ENCODE measurements at regions of chr10 and their contacts with region 1.

Region 1: DNA sequence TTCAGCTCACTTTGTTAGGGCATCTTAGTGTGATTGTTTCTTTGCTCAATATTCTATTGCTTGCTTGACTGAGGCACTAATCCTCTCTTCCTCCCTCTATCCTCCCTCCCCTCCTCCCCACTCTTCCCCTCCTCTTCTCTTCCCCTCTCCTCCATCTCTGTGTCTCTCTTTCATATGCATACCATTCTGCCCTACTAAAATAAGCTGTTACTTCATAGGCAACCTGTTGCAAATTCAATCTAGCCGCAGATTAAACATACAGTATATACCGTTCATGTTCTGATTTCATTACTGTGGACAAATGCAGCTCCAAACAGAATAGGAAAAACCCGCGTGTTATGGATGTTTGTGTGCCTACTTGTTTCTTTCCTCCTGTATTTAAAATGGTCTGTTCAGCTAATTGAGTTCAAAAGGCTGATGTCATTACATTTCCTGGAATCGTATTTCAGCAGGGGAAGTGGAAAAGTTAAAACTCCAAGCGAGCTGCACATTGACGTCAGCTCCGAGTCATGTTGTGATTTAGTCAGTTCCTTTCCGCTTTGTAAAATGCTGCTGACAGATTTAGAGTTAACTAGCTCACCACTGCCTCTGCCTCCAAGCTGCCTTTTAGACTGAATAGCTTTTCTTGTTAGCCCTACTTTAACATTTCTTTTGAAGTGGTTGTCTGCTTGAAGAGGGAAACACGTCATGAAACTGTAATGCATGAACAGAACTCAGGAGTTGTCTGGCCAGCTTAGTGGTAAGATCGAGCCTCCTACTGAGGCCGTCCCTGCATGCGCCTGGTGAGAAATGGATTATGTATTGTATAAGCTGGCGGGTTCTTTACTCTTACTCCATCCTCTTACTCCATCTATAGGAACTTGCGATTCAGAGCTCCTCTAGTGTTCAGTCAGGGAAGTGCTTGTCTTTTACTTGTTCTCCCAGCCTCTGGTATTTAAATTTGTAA is 69.0 kb downstream of the CREM start:
- DNase-seq: peak; percentile 34 to 97 (median 83)
- ATAC-seq: peak; percentile 83 to 91 (median 89)
- H3K4me3 ChIP-seq: peak overlapping the region; percentile 44 to 45
- H3K4me3 Mint-ChIP-seq: peak overlapping the region; percentile 78 to 84 (median 84)
- H3K27ac ChIP-seq: peak overlapping the region; percentile 99
- H3K27ac Mint-ChIP-seq: peak overlapping the region; percentile 95 to 98
- H3K4me1 ChIP-seq: peaks cover 8 to 10% of the 10 kb centered on the region in 2 experiments
- H3K4me1 Mint-ChIP-seq: peaks cover 31 to 49% (median 34%) of the 10 kb centered on the region in 3 donors
- H3K27me3 ChIP-seq: no peaks in the 10 kb centered on the region
- H3K27me3 Mint-ChIP-seq: no peaks in the 10 kb centered on the region

Region 2: DNA sequence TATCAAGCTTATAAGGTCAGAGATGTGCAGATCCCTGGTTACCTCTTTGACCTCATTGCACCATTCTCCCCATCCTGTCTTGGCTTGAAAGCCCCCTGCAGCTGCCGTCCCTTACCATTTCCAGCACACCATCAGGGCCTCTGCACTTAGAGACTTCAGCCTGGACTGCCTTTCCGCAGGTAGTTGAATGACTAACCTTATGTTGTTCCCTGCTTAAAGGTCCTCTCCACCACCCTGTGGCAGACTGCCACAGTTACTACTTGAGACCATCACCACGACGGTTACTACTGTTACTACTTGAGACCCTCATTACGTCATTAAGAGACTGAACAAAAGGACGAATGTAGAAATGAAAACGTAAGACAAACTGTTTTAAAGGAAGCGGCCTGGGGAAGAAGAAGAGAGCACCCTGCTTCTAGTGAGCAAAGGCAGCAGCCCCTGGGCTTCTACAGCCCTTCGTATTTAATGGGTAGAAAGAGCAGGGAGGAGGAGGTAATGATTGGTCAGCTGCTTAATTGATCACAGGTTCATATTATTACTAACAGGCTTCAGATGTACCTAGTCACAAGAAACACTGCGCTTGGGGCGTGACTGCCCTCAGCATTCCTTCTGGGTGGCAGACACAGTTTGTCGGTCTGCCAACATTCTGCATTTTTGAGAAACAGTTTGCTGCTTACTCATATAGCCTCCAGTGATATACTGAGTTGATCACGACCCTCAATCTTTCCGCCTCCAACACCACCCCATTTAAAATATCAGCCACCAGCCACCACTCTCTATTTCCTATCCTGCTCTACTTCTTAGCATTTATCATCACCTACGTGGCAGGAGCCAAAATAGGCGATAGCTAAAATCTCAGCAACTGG is 306.4 kb before region 1 on chr10:
- CTCF ChIA-PET with region 1: no interaction called
- POLR2A ChIA-PET with region 1: no interaction called
- DNase-seq: no peak
- ATAC-seq: no peak
- H3K4me3 ChIP-seq: no peak overlapping the region
- H3K4me3 Mint-ChIP-seq: no peak overlapping the region
- H3K27ac ChIP-seq: no peak overlapping the region
- H3K27ac Mint-ChIP-seq: no peak overlapping the region
- H3K4me1 ChIP-seq: no peaks in the 10 kb centered on the region
- H3K4me1 Mint-ChIP-seq: no peaks in the 10 kb centered on the region
- H3K27me3 ChIP-seq: peaks cover 0 to 10% of the 10 kb centered on the region in 2 experiments
- H3K27me3 Mint-ChIP-seq: no peaks in the 10 kb centered on the region

Region 3: GRCh38 chr10:35119378-35119777 is 76.3 kb before region 1 on chr10:
- CTCF ChIA-PET with region 1: interaction called, 9 to 253 read pairs
- POLR2A ChIA-PET with region 1: interaction called, 9 to 21 read pairs
- DNase-seq: no peak
- ATAC-seq: no peak
- H3K4me3 ChIP-seq: no peak overlapping the region
- H3K4me3 Mint-ChIP-seq: no peak overlapping the region
- H3K27ac ChIP-seq: no peak overlapping the region
- H3K27ac Mint-ChIP-seq: no peak overlapping the region
- H3K4me1 ChIP-seq: no peaks in the 10 kb centered on the region
- H3K4me1 Mint-ChIP-seq: peaks cover 0 to 12% (median 3%) of the 10 kb centered on the region in 3 donors
- H3K27me3 ChIP-seq: no peaks in the 10 kb centered on the region
- H3K27me3 Mint-ChIP-seq: no peaks in the 10 kb centered on the region

Region 4: GRCh38 chr10:35135861-35136260 is 59.8 kb before region 1 on chr10:
- CTCF ChIA-PET with region 1: interaction called, 4 to 28 read pairs
- POLR2A ChIA-PET with region 1: interaction called, 8 to 261 read pairs
- DNase-seq: peak in 6 of 35 experiments; percentile 13 to 45 (median 20)
- ATAC-seq: peak in 2 of 4 experiments; percentile 24 to 42
- H3K4me3 ChIP-seq: no peak overlapping the region
- H3K4me3 Mint-ChIP-seq: peak overlapping the region; percentile 28 to 47 (median 42)
- H3K27ac ChIP-seq: peak overlapping the region; percentile 59
- H3K27ac Mint-ChIP-seq: peak overlapping the region; percentile 75 to 85
- H3K4me1 ChIP-seq: peaks cover 0 to 17% of the 10 kb centered on the region in 2 experiments
- H3K4me1 Mint-ChIP-seq: peaks cover 40 to 47% (median 45%) of the 10 kb centered on the region in 3 donors
- H3K27me3 ChIP-seq: no peaks in the 10 kb centered on the region
- H3K27me3 Mint-ChIP-seq: no peaks in the 10 kb centered on the region

Region 5: DNA sequence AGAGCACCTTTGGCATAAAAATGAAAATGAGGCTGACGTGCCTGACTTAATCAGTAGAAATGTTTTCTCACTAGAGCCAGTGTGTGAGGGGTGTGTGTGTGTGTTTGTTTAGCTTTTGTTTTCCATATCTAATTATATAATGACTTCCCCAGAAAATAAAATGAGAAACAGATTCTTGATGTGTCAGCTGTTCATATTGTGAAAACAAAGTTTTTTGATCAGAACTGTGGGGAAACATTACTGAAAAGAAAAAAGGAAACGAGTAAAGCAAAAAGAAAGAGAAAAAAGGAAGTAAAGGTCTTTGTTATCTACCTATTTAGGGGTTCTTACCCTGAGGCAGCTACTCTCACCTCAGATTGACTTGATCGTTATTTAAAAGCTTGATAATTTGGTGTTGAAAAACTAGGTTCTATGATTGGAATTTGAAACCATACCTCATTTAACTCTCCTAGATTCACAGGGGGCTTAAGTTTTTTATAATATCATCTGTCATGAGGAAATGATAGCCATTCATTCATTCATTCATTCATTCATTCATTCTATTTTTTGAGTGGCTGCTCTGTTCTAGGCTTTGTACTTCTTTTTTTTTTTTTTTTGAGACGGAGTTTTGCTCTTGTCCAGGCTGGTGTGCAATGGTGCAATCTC is 11.0 kb before region 1 on chr10:
- CTCF ChIA-PET with region 1: interaction called, 3 to 17 read pairs
- POLR2A ChIA-PET with region 1: interaction called, 3 to 10 read pairs
- DNase-seq: no peak
- ATAC-seq: no peak
- H3K4me3 ChIP-seq: no peak overlapping the region
- H3K4me3 Mint-ChIP-seq: no peak overlapping the region
- H3K27ac ChIP-seq: no peak overlapping the region
- H3K27ac Mint-ChIP-seq: peak overlapping the region in 1 of 2 donors; percentile 46
- H3K4me1 ChIP-seq: no peaks in the 10 kb centered on the region
- H3K4me1 Mint-ChIP-seq: peaks cover 0 to 3% (median 0%) of the 10 kb centered on the region in 3 donors
- H3K27me3 ChIP-seq: no peaks in the 10 kb centered on the region
- H3K27me3 Mint-ChIP-seq: no peaks in the 10 kb centered on the region

Region 6: DNA sequence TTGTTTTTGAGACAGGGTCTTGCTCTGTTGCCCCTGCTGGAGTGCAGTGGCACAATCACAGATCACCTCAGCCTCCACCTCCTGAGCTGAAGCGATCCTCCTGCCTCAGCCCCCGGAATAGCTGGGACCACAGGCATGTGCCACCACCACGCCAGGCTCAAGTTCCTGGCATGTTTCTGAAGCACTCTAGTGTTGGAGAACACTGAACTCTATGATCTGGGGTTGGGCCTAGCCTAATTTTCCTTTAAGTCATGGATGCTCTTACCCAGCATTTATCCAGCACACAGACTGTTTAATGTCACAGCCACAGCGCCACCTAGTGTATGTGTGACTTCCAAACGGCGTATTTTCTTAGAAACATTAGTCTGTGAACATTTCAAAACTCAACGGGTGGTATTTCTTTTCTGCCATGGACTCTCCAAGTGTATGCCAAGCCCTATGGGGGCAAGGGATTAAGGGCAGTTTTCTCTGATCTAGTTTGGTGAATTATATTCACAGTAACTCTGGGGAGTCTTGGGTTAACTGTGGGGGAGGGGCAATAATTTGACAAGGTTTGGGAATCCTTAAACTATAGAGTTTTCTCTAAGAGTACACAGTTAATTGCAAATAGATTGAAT is 22.8 kb after region 1 on chr10:
- CTCF ChIA-PET with region 1: interaction called, 6 to 39 read pairs
- POLR2A ChIA-PET with region 1: interaction called in 1 of 2 experiments, 6 read pairs
- DNase-seq: peak; percentile 57 to 93 (median 78)
- ATAC-seq: peak; percentile 65 to 81 (median 72)
- H3K4me3 ChIP-seq: no peak overlapping the region
- H3K4me3 Mint-ChIP-seq: peak overlapping the region; percentile 8 to 57 (median 39)
- H3K27ac ChIP-seq: no peak overlapping the region
- H3K27ac Mint-ChIP-seq: peak overlapping the region in 1 of 2 donors; percentile 71
- H3K4me1 ChIP-seq: peaks cover 0 to 5% of the 10 kb centered on the region in 2 experiments
- H3K4me1 Mint-ChIP-seq: peaks cover 11 to 31% (median 20%) of the 10 kb centered on the region in 3 donors
- H3K27me3 ChIP-seq: peaks cover 0 to 6% of the 10 kb centered on the region in 2 experiments
- H3K27me3 Mint-ChIP-seq: no peaks in the 10 kb centered on the region

Region 7: GRCh38 chr10:35336084-35336831 is 140.6 kb after region 1 on chr10 and contains the start of gene CCNY:
- CTCF ChIA-PET with region 1: interaction called in 1 of 2 experiments, 12 read pairs
- POLR2A ChIA-PET with region 1: interaction called, 4 to 12 read pairs
- DNase-seq: peak; percentile 57 to 84 (median 75)
- ATAC-seq: peak; percentile 86 to 89 (median 88)
- H3K4me3 ChIP-seq: peak within 1 kb of the TSS; percentile 70 to 79
- H3K4me3 Mint-ChIP-seq: peak within 1 kb of the TSS; percentile 84 to 90 (median 87)
- H3K27ac ChIP-seq: peak within 1 kb of the TSS; percentile 47
- H3K27ac Mint-ChIP-seq: peak within 1 kb of the TSS; percentile 80 to 82
- H3K4me1 ChIP-seq: peaks cover 19 to 28% of the 10 kb centered on the region in 2 experiments
- H3K4me1 Mint-ChIP-seq: peaks cover 68 to 71% (median 70%) of the 10 kb centered on the region in 3 donors
- H3K27me3 ChIP-seq: no peaks in the 10 kb centered on the region
- H3K27me3 Mint-ChIP-seq: no peaks in the 10 kb centered on the region
- total RNA-seq, gene CCNY: 62.5 to 75.2 (median 62.8) TPM